Naive thymus-derived CD4-positive, alpha-beta T cell (primary cell): ENCODE measurements at regions of chr12 and their contacts with region 1.

Region 1: GRCh38 chr12:1795785-1796514 is 24.4 kb upstream of the LRTM2 start:
- DNase-seq: peak; percentile 89 to 98 (median 93)
- ATAC-seq: peak; percentile 97
- H3K4me3 ChIP-seq: peak overlapping the region; percentile 74
- H3K4me3 Mint-ChIP-seq: peak overlapping the region; percentile 85 to 95 (median 93)
- H3K27ac ChIP-seq: peak overlapping the region; percentile 80
- H3K27ac Mint-ChIP-seq: peak overlapping the region; percentile 82 to 97 (median 91)
- H3K4me1 ChIP-seq: peaks cover 6 to 13% of the 10 kb centered on the region in 2 donors
- H3K4me1 Mint-ChIP-seq: peaks cover 10 to 24% (median 19%) of the 10 kb centered on the region in 7 donors
- H3K27me3 ChIP-seq: no peaks in the 10 kb centered on the region
- H3K27me3 Mint-ChIP-seq: no peaks in the 10 kb centered on the region

Region 2: GRCh38 chr12:1594261-1595025 is 201.5 kb before region 1 on chr12 and contains the start of gene FBXL14:
- CTCF ChIA-PET with region 1: no interaction called
- POLR2A ChIA-PET with region 1: no interaction called
- intact Hi-C with region 1: loop called in 1 of 2 experiments (anchors 1 kb)
- DNase-seq: peak; percentile 87 to 93 (median 92)
- ATAC-seq: peak; percentile 85
- H3K4me3 ChIP-seq: peak within 1 kb of the TSS; percentile 91
- H3K4me3 Mint-ChIP-seq: peak within 1 kb of the TSS; percentile 89 to 98 (median 95)
- H3K27ac ChIP-seq: peak within 1 kb of the TSS; percentile 80
- H3K27ac Mint-ChIP-seq: peak within 1 kb of the TSS; percentile 94 to 97 (median 94)
- H3K4me1 ChIP-seq: peaks cover 19 to 23% of the 10 kb centered on the region in 2 donors
- H3K4me1 Mint-ChIP-seq: peaks cover 40 to 53% (median 44%) of the 10 kb centered on the region in 7 donors
- H3K27me3 ChIP-seq: no peaks in the 10 kb centered on the region
- H3K27me3 Mint-ChIP-seq: peaks cover 0 to 9% (median 0%) of the 10 kb centered on the region in 5 donors
- total RNA-seq, gene FBXL14: 25.6 to 43.8 (median 28.1) TPM

Region 3: GRCh38 chr12:1650260-1650977 is 145.5 kb before region 1 on chr12:
- CTCF ChIA-PET with region 1: interaction called, 278 read pairs
- POLR2A ChIA-PET with region 1: interaction called, 12 read pairs
- intact Hi-C with region 1: loop called (anchors 1 kb)
- DNase-seq: no peak
- ATAC-seq: no peak
- H3K4me3 ChIP-seq: no peak overlapping the region
- H3K4me3 Mint-ChIP-seq: no peak overlapping the region
- H3K27ac ChIP-seq: no peak overlapping the region
- H3K27ac Mint-ChIP-seq: peak overlapping the region in 1 of 9 donors; percentile 46
- H3K4me1 ChIP-seq: no peaks in the 10 kb centered on the region
- H3K4me1 Mint-ChIP-seq: peaks cover 0 to 6% (median 4%) of the 10 kb centered on the region in 7 donors
- H3K27me3 ChIP-seq: no peaks in the 10 kb centered on the region
- H3K27me3 Mint-ChIP-seq: peaks cover 4 to 44% (median 9%) of the 10 kb centered on the region in 5 donors

Region 4: GRCh38 chr12:1915082-1915968 is 119.4 kb after region 1 on chr12:
- CTCF ChIA-PET with region 1: interaction called, 4 read pairs
- POLR2A ChIA-PET with region 1: interaction called, 4 read pairs
- intact Hi-C with region 1: loop called in 1 of 2 experiments (anchors 1 kb)
- DNase-seq: peak in 8 of 9 donors; percentile 29 to 67 (median 58)
- ATAC-seq: peak; percentile 85
- H3K4me3 ChIP-seq: peak overlapping the region; percentile 23
- H3K4me3 Mint-ChIP-seq: peak overlapping the region; percentile 32 to 82 (median 62)
- H3K27ac ChIP-seq: no peak overlapping the region
- H3K27ac Mint-ChIP-seq: peak overlapping the region; percentile 57 to 90 (median 82)
- H3K4me1 ChIP-seq: peaks cover 11 to 23% of the 10 kb centered on the region in 2 donors
- H3K4me1 Mint-ChIP-seq: peaks cover 18 to 41% (median 32%) of the 10 kb centered on the region in 7 donors
- H3K27me3 ChIP-seq: no peaks in the 10 kb centered on the region
- H3K27me3 Mint-ChIP-seq: peaks cover under 1 to 20% (median 9%) of the 10 kb centered on the region in 5 donors

Region 5: DNA sequence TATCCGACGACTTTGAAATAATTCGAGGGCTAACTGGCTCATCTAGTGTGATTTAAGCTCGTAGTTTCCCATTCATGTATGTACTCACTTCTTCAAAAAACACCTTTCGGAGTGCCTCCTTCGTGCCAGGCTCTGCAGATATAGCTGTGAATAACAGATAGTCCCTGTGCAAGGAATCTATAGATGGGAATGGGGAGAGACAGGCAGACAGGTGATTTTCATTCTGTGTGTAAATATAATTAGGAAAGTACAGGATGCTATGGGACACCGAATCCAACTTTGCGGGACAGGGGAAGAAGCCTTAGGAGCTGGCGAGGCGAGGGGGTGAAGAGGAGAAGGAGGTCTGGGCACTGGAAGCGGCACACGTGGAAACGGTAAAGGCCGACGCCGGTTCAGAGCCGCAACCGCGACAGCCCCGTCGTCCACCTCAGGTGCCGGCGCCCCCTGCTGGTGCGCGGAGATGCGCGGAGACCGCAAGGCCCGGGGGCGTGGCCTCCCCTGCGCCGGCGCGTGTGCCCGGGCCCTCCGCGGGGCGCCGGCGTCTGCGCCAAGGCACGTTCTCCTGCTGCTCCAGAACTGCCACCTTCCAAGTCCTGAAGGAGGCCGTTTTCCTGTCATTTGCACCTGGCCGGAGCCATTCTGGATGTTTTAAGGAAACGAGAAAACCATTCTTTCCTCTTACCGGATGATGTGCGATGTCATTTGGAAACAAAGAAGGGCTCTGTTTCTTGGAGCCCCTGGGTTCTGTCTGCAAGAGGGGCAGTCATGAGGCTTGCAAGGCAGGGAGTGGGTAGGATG is 238.9 kb after region 1 on chr12:
- CTCF ChIA-PET with region 1: interaction called, 3 read pairs
- POLR2A ChIA-PET with region 1: no interaction called
- intact Hi-C with region 1: loop called (anchors 1 kb)
- DNase-seq: peak; percentile 70 to 94 (median 83)
- ATAC-seq: peak; percentile 100
- H3K4me3 ChIP-seq: peak overlapping the region; percentile 64
- H3K4me3 Mint-ChIP-seq: peak overlapping the region; percentile 67 to 81 (median 74)
- H3K27ac ChIP-seq: no peak overlapping the region
- H3K27ac Mint-ChIP-seq: peak overlapping the region in 4 of 9 donors; percentile 6 to 85 (median 47)
- H3K4me1 ChIP-seq: peaks cover 0 to 4% of the 10 kb centered on the region in 2 donors
- H3K4me1 Mint-ChIP-seq: peaks cover 6 to 15% (median 13%) of the 10 kb centered on the region in 7 donors
- H3K27me3 ChIP-seq: peaks cover 0 to 4% of the 10 kb centered on the region in 2 donors
- H3K27me3 Mint-ChIP-seq: peaks cover 33 to 75% (median 36%) of the 10 kb centered on the region in 5 donors

Region 6: DNA sequence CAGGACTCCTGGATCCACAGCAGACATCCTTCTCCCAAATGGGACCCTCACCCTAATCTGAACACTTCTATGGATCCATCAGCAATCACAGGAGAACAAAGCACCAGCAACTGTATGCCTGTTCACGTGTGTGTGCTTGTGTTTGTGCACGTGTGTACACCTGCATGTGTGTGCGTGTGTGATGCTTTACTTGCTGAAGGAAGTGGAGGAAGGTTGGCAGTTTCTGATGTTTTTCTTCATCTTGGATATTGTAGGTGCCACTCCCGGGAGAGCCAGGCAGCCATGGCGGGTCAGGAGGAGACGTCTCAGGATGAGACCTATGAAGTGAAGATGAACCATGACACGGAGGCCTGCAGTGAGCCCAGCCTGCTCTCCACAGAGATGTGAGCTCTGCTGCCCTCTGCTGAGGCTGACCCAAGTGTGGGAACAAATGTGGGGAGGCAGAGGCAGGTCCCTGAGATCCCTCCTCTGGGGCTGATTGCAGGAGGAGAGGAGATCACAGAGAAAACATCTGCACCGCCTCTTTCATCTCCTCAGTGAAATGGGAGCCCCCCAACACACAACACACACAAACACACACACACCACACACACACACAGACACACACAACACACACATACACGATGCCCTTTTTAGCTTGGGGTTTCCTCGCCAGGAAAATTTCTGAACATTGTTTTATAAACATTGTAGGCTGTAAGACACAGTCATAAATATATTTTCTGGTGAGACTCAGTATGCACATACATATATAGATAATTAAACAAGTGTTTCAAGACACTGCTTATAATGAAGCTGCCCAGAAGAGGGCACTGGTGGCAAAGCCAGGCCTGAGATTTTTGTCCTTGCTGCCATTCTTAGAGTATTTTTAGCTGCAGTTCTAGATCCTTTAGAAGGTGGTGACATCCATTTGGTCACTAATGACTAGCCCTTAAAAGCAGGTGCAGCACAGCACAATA is 886.6 kb after region 1 on chr12:
- CTCF ChIA-PET with region 1: no interaction called
- POLR2A ChIA-PET with region 1: no interaction called
- intact Hi-C with region 1: loop called in 1 of 2 experiments (anchors 2 kb)
- DNase-seq: peak in 7 of 9 donors; percentile 37 to 70 (median 59)
- ATAC-seq: peak; percentile 71
- H3K4me3 ChIP-seq: no peak overlapping the region
- H3K4me3 Mint-ChIP-seq: peak overlapping the region in 3 of 10 donors; percentile 43 to 67 (median 47)
- H3K27ac ChIP-seq: no peak overlapping the region
- H3K27ac Mint-ChIP-seq: peak overlapping the region; percentile 76 to 98 (median 88)
- H3K4me1 ChIP-seq: no peaks in the 10 kb centered on the region
- H3K4me1 Mint-ChIP-seq: peaks cover 5 to 12% (median 9%) of the 10 kb centered on the region in 7 donors
- H3K27me3 ChIP-seq: no peaks in the 10 kb centered on the region
- H3K27me3 Mint-ChIP-seq: no peaks in the 10 kb centered on the region